IMR-90 (cell line): ENCODE measurements at regions of chr11 and their contacts with region 1.

Region 1: DNA sequence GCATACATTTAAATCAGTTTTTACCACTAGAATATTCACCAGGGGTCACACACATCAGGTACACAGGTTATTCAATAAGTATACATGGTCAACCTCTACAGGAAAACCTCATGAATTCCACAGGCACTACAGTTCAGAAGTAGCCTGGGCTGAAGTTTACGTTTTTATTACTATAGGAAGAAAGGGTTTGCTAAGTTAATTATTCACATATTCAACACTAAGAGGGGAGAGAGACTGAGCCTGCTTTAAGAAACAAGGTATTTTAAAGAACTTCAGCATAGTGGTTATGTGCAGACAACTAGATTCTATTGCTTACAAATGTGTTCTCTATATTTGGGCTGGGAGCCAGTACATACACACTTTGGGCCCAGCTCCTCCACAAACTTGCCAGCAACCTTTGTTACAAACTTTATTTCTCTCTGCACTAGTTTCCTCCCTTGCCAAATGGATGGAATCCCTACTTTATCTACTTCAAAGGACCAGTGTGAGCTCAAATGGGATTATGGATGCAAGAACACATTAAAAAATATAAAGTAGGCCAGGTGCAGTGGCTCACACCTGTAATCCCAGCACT is 31.9 kb downstream of the IL18BP start:
- DNase-seq: no peak
- ATAC-seq: no peak
- H3K4me3 ChIP-seq: no peak overlapping the region
- H3K27ac ChIP-seq: no peak overlapping the region
- H3K4me1 ChIP-seq: peaks cover 5% of the 10 kb centered on the region
- H3K27me3 ChIP-seq: no peaks in the 10 kb centered on the region
- CTCF ChIP-seq: no peak
- POLR2A ChIP-seq: no peak
- RAD21 ChIP-seq: no peak

Region 2: DNA sequence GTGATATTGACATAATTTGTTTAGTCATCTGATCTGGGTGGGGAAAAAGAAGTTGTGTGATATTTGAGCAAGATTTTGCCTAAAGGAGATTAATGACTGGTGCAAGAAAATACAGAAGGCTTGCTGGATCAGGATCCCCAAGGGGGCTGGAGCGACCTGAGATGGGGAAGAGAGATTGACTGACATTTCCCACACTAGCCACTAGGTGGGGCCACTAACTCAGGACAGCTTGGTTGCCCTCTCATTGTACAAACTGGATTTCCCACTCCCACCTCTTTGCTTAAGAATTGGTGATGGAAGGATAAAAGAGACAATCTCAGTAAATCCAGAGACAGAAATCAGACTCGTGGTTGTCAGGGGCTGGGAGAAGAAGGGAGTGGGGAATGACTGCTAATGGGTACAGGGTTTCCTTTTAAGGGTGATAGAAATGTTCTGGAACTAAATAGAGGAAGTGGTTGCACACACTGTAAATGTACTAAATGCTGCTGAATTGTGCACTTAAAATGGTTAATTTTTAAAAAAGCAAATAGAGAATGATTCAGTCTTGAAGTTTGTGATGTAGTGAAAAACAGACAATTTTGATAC is 1581.5 kb before region 1 on chr11:
- CTCF ChIA-PET with region 1: no interaction called
- POLR2A ChIA-PET with region 1: no interaction called
- dilution Hi-C with region 1: no loop called
- in situ Hi-C with region 1: no loop called
- intact Hi-C with region 1: no loop called
- DNase-seq: no peak
- ATAC-seq: no peak
- H3K4me3 ChIP-seq: no peak overlapping the region
- H3K27ac ChIP-seq: no peak overlapping the region
- H3K4me1 ChIP-seq: no peaks in the 10 kb centered on the region
- H3K27me3 ChIP-seq: no peaks in the 10 kb centered on the region
- CTCF ChIP-seq: peak; percentile 31; the same call in 1 of the 2 replicates
- POLR2A ChIP-seq: no peak
- RAD21 ChIP-seq: no peak

Region 3: GRCh38 chr11:72080256-72080974 is 49.9 kb after region 1 on chr11 and contains the starts of genes LRRC51 and NUMA1:
- CTCF ChIA-PET with region 1: interaction called, 12 read pairs
- POLR2A ChIA-PET with region 1: no interaction called
- dilution Hi-C with region 1: no loop called
- in situ Hi-C with region 1: loop called (anchors 5 kb)
- intact Hi-C with region 1: loop called (anchors 1 kb)
- DNase-seq: peak; percentile 100
- ATAC-seq: peak; percentile 95
- H3K4me3 ChIP-seq: peak within 1 kb of the TSS; percentile 57
- H3K27ac ChIP-seq: peak within 1 kb of the TSS; percentile 74
- H3K4me1 ChIP-seq: peaks cover 2% of the 10 kb centered on the region; the same call in 1 of the 2 replicates
- H3K27me3 ChIP-seq: no peaks in the 10 kb centered on the region
- CTCF ChIP-seq: no peak
- POLR2A ChIP-seq: peak; percentile 65
- RAD21 ChIP-seq: no peak
- total RNA-seq, gene LRRC51: 4.4 and 5.6 TPM in 2 replicates
- total RNA-seq, gene NUMA1: 56.7 and 61.7 TPM in 2 replicates

Region 4: GRCh38 chr11:72102946-72103753 is 72.6 kb after region 1 on chr11 and contains the start of gene LAMTOR1:
- CTCF ChIA-PET with region 1: interaction called, 8 read pairs
- POLR2A ChIA-PET with region 1: no interaction called
- dilution Hi-C with region 1: no loop called
- in situ Hi-C with region 1: loop called (anchors 10 kb)
- intact Hi-C with region 1: loop called (anchors 1 kb)
- DNase-seq: peak; percentile 99
- ATAC-seq: peak; percentile 95
- H3K4me3 ChIP-seq: peak within 1 kb of the TSS; percentile 75
- H3K27ac ChIP-seq: peak within 1 kb of the TSS; percentile 94
- H3K4me1 ChIP-seq: peaks cover 10% of the 10 kb centered on the region
- H3K27me3 ChIP-seq: no peaks in the 10 kb centered on the region
- CTCF ChIP-seq: peak; percentile 48
- POLR2A ChIP-seq: peak; percentile 93
- RAD21 ChIP-seq: peak; percentile 37
- total RNA-seq, gene LAMTOR1: 118 and 137 TPM in 2 replicates

Region 5: DNA sequence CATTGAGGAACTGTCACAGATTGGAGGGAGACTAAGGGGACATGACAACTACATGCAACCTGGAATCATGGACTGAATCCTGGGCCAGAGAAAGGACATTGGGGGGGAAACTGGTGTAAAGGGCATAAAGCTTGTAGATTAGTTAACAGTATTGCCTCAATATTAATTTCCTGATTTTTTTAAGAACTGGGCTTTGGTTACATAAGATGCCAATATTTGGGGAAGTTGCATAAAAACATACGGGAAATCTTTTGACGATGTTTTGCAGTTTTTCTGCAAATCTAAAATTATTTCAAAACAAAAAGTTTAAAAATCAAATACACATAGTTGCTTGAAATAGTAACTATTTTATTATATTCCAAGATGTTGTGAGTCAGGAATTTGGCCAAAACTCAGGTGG is 102.1 kb after region 1 on chr11:
- CTCF ChIA-PET with region 1: no interaction called
- POLR2A ChIA-PET with region 1: no interaction called
- dilution Hi-C with region 1: no loop called
- in situ Hi-C with region 1: no loop called
- intact Hi-C with region 1: no loop called
- DNase-seq: no peak
- ATAC-seq: no peak
- H3K4me3 ChIP-seq: no peak overlapping the region
- H3K27ac ChIP-seq: no peak overlapping the region
- H3K4me1 ChIP-seq: peaks cover 6% of the 10 kb centered on the region
- H3K27me3 ChIP-seq: peaks cover 5% of the 10 kb centered on the region
- CTCF ChIP-seq: no peak
- POLR2A ChIP-seq: no peak
- RAD21 ChIP-seq: no peak

Region 6: GRCh38 chr11:72179804-72180396 is 149.3 kb after region 1 on chr11:
- CTCF ChIA-PET with region 1: interaction called, 12 read pairs
- POLR2A ChIA-PET with region 1: no interaction called
- dilution Hi-C with region 1: no loop called
- in situ Hi-C with region 1: no loop called
- intact Hi-C with region 1: loop called (anchors 1 kb)
- DNase-seq: no peak
- ATAC-seq: no peak
- H3K4me3 ChIP-seq: no peak overlapping the region
- H3K27ac ChIP-seq: no peak overlapping the region
- H3K4me1 ChIP-seq: 0 out of 2 replicates have a peak, but pooled peaks cover 1% of the 10 kb centered on the region
- H3K27me3 ChIP-seq: no peaks in the 10 kb centered on the region; the same call in 1 of the 2 replicates
- CTCF ChIP-seq: no peak
- POLR2A ChIP-seq: no peak
- RAD21 ChIP-seq: no peak

Region 7: DNA sequence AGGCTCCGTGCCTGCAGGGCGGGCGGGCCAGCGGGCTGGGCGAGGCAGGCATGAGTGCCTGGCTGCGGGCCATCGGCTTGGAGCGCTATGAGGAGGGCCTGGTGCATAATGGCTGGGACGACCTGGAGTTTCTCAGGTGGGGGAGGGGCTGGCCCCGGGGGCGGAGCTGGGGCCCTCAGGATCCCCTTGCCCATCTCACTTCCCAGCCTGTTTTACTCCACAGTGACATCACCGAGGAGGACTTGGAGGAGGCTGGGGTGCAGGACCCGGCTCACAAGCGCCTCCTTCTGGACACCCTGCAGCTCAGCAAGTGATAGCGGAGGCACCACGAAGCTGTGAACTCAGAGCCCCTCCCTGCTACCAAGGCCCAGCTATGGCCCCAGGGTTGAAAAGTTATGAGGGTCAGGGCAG is 207.5 kb after region 1 on chr11:
- CTCF ChIA-PET with region 1: interaction called, 4 read pairs
- POLR2A ChIA-PET with region 1: no interaction called
- dilution Hi-C with region 1: no loop called
- in situ Hi-C with region 1: loop called (anchors 5 kb)
- intact Hi-C with region 1: loop called (anchors 1 kb)
- DNase-seq: peak; percentile 67
- ATAC-seq: peak; percentile 50
- H3K4me3 ChIP-seq: no peak overlapping the region
- H3K27ac ChIP-seq: no peak overlapping the region
- H3K4me1 ChIP-seq: peaks cover 2% of the 10 kb centered on the region; the same call in 1 of the 2 replicates
- H3K27me3 ChIP-seq: peaks cover 28% of the 10 kb centered on the region
- CTCF ChIP-seq: peak; percentile 66
- POLR2A ChIP-seq: no peak
- RAD21 ChIP-seq: peak; percentile 71

Region 8: GRCh38 chr11:72430741-72431570 is 400.4 kb after region 1 on chr11:
- CTCF ChIA-PET with region 1: interaction called, 17 read pairs
- POLR2A ChIA-PET with region 1: no interaction called
- dilution Hi-C with region 1: no loop called
- in situ Hi-C with region 1: no loop called
- intact Hi-C with region 1: loop called (anchors 1 kb)
- DNase-seq: peak; percentile 59
- ATAC-seq: peak; percentile 61
- H3K4me3 ChIP-seq: no peak overlapping the region
- H3K27ac ChIP-seq: no peak overlapping the region
- H3K4me1 ChIP-seq: peaks cover 3% of the 10 kb centered on the region; the same call in 1 of the 2 replicates
- H3K27me3 ChIP-seq: no peaks in the 10 kb centered on the region
- CTCF ChIP-seq: peak; percentile 89
- POLR2A ChIP-seq: no peak
- RAD21 ChIP-seq: peak; percentile 92